Activated CD4-positive, alpha-beta T cell treated with anti-CD3 and anti-CD28 coated beads, Interleukin-2, amount 10 ng/mL, durations not matched to agents 24 days and 14 days (primary cell): ENCODE measurements at regions of chr11 and their contacts with region 1.

Region 1: GRCh38 chr11:95089620-95090542 is at the start of gene ENDOD1:
- DNase-seq: peak; percentile 96
- H3K4me3 Mint-ChIP-seq: peak within 1 kb of the TSS; percentile 91
- H3K27ac Mint-ChIP-seq: peak within 1 kb of the TSS; percentile 98
- H3K4me1 Mint-ChIP-seq: peaks cover 67% of the 10 kb centered on the region
- H3K27me3 Mint-ChIP-seq: no peaks in the 10 kb centered on the region
- total RNA-seq, gene ENDOD1: 34.1 and 34.3 TPM in 2 replicates

Region 2: DNA sequence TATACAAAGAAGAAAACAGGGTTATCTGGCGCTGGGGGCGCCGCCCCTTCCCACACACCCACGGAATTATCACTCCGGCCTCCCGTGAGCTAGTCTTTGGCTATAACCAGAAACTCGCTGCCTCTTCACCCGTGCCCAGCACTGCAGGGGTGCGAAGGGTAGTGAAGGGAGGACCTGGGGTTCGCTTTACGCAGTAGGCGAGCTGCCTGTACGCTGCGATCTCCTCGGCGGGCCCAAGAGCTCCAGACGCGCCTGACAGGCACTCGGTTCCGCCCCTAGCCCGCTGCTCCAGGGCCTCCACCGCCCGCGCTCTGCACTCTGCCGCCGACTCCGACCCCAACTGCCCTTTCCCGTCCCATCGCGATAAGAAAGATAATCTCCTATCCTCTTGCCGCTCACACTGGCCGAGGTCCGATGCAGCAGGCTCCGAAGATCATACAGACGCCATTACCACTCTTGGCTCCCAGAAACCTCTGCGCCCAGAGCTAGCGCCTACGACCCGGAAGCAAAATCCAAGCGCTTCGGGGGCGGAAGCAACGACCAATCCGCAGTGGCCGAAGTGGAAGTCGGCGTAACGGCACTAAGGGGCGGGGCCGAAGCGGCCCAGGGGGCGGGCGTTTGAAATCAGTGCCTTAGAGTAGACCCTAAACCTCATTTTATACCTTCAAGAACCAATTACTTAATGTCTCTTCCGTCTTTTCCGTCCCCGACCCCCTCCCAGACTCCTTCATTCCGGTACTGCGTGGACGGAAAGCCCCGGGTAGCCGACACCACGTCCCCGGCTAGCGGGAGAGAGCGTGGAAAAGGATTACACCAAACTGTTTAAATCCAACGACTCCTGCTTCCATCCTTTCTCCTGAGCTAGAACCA is 116.5 kb before region 1 on chr11 and contains the starts of genes CWC15 and KDM4D:
- intact Hi-C with region 1: loop called (anchors 2 kb)
- DNase-seq: peak; percentile 98
- H3K4me3 Mint-ChIP-seq: peak within 1 kb of the TSS; percentile 94
- H3K27ac Mint-ChIP-seq: peak within 1 kb of the TSS; percentile 93
- H3K4me1 Mint-ChIP-seq: peaks cover 33% of the 10 kb centered on the region
- H3K27me3 Mint-ChIP-seq: no peaks in the 10 kb centered on the region
- total RNA-seq, gene CWC15: 87.6 and 96.2 TPM in 2 replicates
- total RNA-seq, gene KDM4D: 1.2 TPM in 2 replicates

Region 3: GRCh38 chr11:95102733-95103132 is 12.9 kb after region 1 on chr11:
- intact Hi-C with region 1: loop called (anchors 1 kb)
- DNase-seq: peak; percentile 40
- H3K4me3 Mint-ChIP-seq: no peak overlapping the region
- H3K27ac Mint-ChIP-seq: peak overlapping the region; percentile 14
- H3K4me1 Mint-ChIP-seq: peaks cover 12% of the 10 kb centered on the region
- H3K27me3 Mint-ChIP-seq: no peaks in the 10 kb centered on the region

Region 4: GRCh38 chr11:95705485-95706124 is 615.7 kb after region 1 on chr11:
- intact Hi-C with region 1: loop called (anchors 10 kb)
- DNase-seq: peak; percentile 96
- H3K4me3 Mint-ChIP-seq: no peak overlapping the region
- H3K27ac Mint-ChIP-seq: no peak overlapping the region
- H3K4me1 Mint-ChIP-seq: peaks cover 17% of the 10 kb centered on the region
- H3K27me3 Mint-ChIP-seq: no peaks in the 10 kb centered on the region

Region 5: GRCh38 chr11:95923728-95924413 is 834.0 kb after region 1 on chr11 and contains the start of gene MTMR2:
- intact Hi-C with region 1: no loop called
- DNase-seq: peak; percentile 86
- H3K4me3 Mint-ChIP-seq: peak within 1 kb of the TSS; percentile 99
- H3K27ac Mint-ChIP-seq: peak within 1 kb of the TSS; percentile 96
- H3K4me1 Mint-ChIP-seq: peaks cover 24% of the 10 kb centered on the region
- H3K27me3 Mint-ChIP-seq: peaks cover 12% of the 10 kb centered on the region
- total RNA-seq, gene MTMR2: 37.5 and 38.4 TPM in 2 replicates